ENCODE measurements at regions of chr2 and their contacts with region 1.

Region 1: DNA sequence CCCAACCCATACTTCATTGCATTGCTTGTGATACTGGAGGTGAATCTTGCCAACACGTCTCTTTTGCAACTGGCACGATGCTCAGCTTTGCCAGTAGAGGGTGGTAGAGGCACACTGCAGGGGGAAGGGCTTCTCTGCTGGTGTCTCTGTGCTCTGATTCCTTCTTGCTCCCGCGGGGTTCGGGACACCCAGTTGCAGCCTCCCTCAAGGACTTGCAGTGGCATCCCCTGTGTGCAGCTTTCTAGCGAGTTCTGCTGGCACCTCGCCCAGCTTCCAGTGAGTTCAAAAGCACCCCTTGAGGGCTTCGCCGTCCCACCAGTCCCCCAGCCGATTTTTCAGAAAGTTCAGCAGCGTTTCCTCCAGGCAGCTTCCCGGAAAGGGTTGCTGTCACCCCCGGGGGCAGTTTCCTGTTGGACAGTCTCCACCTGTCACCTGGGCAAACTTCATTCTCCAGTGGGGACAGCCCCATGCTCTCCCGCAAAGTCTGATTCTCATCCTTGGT is 35.3 kb upstream of the EN1 start:
- DNase-seq: peak; percentile 74
- H3K4me3 Mint-ChIP-seq: no peak overlapping the region
- H3K27ac Mint-ChIP-seq: no peak overlapping the region
- H3K4me1 Mint-ChIP-seq: peaks cover 10% of the 10 kb centered on the region
- H3K27me3 Mint-ChIP-seq: no peaks in the 10 kb centered on the region
- CTCF ChIP-seq: peak; percentile 97

Region 2: GRCh38 chr2:118865106-118865505 is 17.7 kb before region 1 on chr2:
- CTCF ChIA-PET with region 1: interaction called, 10 read pairs
- POLR2A ChIA-PET with region 1: no interaction called
- intact Hi-C with region 1: no loop called
- DNase-seq: peak; percentile 65
- H3K4me3 Mint-ChIP-seq: no peak overlapping the region
- H3K27ac Mint-ChIP-seq: no peak overlapping the region
- H3K4me1 Mint-ChIP-seq: peaks cover 14% of the 10 kb centered on the region
- H3K27me3 Mint-ChIP-seq: no peaks in the 10 kb centered on the region
- CTCF ChIP-seq: peak; percentile 80

Region 3: DNA sequence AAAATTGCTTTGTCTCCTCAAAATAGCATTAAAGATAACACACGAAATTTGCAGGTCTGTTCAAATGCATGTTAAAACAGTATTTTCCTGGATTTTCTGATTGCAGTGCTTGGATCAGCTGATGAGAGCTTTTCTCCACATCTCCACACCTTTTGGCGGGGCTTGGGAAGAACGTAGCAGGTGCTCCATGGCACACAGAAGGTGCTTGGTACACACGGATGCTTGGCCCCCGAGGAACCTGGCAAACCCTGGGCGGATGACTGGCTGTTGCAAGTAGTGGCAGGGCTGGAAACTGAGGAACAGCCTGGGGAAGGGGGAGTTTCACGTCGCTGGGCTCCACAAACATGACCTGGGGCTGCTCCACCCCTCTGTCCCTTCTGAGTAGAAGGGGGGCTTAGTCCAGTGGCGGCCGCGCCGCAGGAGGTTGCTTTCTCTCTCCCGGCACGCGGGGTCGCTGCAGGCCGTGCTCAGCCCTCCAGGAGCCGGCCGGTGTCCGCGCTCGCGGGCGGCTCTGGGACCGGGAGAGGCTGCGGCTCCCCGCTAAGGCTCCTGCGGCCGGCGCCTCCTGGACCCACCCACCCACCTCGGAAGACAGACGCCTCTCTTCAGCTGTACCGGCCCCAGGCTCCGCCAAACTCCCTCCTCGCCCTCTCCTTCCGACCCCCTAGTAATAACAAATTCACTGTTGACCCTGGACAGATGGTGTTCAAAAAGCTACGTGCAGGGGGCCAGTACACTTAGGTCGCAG is 128.6 kb after region 1 on chr2:
- CTCF ChIA-PET with region 1: interaction called, 5 read pairs
- POLR2A ChIA-PET with region 1: interaction called, 3 read pairs
- intact Hi-C with region 1: loop called (anchors 1 kb)
- DNase-seq: no peak
- H3K4me3 Mint-ChIP-seq: no peak overlapping the region
- H3K27ac Mint-ChIP-seq: no peak overlapping the region
- H3K4me1 Mint-ChIP-seq: no peaks in the 10 kb centered on the region
- H3K27me3 Mint-ChIP-seq: peaks cover 37% of the 10 kb centered on the region
- CTCF ChIP-seq: peak; percentile 24

Region 4: GRCh38 chr2:119126650-119127049 is 243.9 kb after region 1 on chr2:
- CTCF ChIA-PET with region 1: interaction called, 8 read pairs
- POLR2A ChIA-PET with region 1: no interaction called
- intact Hi-C with region 1: loop called (anchors 1 kb)
- DNase-seq: peak; percentile 50
- H3K4me3 Mint-ChIP-seq: no peak overlapping the region
- H3K27ac Mint-ChIP-seq: no peak overlapping the region
- H3K4me1 Mint-ChIP-seq: no peaks in the 10 kb centered on the region
- H3K27me3 Mint-ChIP-seq: peaks cover 51% of the 10 kb centered on the region
- CTCF ChIP-seq: peak; percentile 57

Region 5: DNA sequence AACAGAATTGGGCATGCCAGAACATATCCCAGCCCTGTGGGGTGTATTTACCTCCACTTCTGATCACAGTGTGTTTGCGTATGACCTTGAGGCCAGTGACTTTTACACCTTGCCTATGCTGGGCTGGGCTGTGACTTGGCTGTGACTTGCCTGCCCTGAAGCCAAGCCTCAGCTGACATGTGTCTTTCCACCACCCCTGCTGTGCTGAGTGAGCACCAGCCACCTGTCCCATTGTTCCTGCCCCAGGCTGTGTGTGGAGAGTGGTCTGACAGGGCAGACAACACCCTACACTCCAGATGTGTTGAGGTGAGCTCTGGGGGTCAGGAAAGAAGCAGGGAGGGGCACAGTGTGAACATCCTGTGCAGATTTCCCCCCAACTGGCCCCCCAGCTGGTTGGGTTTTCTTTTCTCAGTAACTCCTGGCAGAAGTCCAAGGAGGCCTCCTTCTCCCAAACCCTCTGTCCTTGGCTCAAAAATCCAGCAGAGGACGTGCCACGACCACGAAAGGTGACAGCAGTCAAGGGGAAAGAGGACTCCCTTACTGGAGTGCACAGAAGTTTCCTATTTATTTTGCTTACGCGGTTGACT is 335.8 kb after region 1 on chr2:
- CTCF ChIA-PET with region 1: interaction called, 15 read pairs
- POLR2A ChIA-PET with region 1: interaction called, 3 read pairs
- intact Hi-C with region 1: no loop called
- DNase-seq: peak; percentile 87
- H3K4me3 Mint-ChIP-seq: peak overlapping the region; percentile 21
- H3K27ac Mint-ChIP-seq: peak overlapping the region; percentile 91
- H3K4me1 Mint-ChIP-seq: peaks cover 33% of the 10 kb centered on the region
- H3K27me3 Mint-ChIP-seq: no peaks in the 10 kb centered on the region
- CTCF ChIP-seq: peak; percentile 54

Region 6: GRCh38 chr2:119264781-119265692 is 382.3 kb after region 1 on chr2:
- CTCF ChIA-PET with region 1: interaction called, 119 read pairs
- POLR2A ChIA-PET with region 1: interaction called, 4 read pairs
- intact Hi-C with region 1: loop called (anchors 1 kb)
- DNase-seq: peak; percentile 75
- H3K4me3 Mint-ChIP-seq: no peak overlapping the region
- H3K27ac Mint-ChIP-seq: no peak overlapping the region
- H3K4me1 Mint-ChIP-seq: peaks cover 9% of the 10 kb centered on the region
- H3K27me3 Mint-ChIP-seq: no peaks in the 10 kb centered on the region
- CTCF ChIP-seq: peak; percentile 84

Region 7: DNA sequence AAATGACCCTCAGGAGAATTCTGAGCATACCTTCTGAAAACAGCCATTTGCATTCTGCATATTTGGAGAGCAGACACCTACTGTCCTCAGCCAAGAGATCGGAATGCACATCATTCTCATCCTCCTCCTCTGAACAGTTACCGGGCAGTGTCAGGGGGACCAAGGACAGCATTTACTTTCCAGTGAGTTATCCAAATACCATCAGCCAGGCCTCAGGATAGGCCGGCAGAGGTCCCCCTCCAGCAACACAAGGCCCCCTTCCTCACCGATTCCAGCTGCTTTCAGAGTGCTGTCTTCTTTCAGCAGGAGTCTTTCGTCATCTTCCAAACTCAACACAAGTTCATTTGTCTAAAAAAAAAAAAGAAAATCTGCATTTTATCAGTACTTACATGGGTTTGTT is 428.6 kb after region 1 on chr2:
- CTCF ChIA-PET with region 1: interaction called, 17 read pairs
- POLR2A ChIA-PET with region 1: interaction called, 3 read pairs
- intact Hi-C with region 1: loop called (anchors 2 kb)
- DNase-seq: no peak
- H3K4me3 Mint-ChIP-seq: no peak overlapping the region
- H3K27ac Mint-ChIP-seq: no peak overlapping the region
- H3K4me1 Mint-ChIP-seq: no peaks in the 10 kb centered on the region
- H3K27me3 Mint-ChIP-seq: no peaks in the 10 kb centered on the region
- CTCF ChIP-seq: no peak

Measured in MCF 10A (cell line).